ENCODE measurements at regions of chr1 and their contacts with region 1.

Region 1: DNA sequence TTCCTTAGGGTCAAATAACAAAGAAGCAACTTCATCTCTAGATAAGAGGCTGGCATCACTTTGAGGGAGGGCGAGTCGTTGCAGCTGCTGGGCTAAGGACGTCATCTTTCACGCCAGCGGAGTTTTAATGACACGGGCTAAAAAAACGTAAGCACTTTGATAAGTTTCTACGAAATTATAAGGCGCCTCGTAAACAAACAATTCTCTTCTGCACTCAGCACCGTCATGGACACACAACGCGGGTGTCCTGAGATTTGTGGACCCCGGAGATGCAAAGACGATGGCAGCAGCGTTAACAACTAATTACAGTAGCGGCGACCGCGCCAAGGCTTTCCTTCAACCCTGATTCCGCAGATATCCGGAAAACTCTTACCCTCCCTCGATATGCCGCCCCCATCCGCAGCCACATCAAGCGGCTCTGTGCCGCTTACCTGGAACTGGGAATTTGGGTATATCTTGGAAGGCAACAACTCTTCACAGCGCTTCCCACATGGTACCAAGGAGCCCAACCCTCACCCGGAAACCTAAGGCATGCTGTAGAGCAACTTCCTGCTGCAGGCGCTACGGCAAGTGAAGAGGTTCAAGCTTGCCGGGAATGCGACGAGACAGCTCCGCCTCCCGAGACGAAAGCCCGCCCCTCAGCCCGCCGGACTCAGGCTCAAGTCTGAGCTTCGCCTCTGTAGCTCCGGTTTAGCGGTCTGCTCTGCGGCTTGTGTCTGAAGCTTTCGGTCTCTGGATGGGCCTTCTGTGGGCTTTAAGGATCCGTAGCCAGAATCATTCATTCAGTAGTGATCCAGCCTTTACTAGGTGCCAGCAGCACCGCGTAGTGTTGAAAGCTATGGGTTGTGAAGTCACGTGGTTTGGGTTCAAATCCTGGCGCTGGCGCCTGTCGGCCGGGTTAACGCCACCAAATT is at the start of gene HEATR1:
- DNase-seq: peak; percentile 99
- H3K4me3 Mint-ChIP-seq: peak within 1 kb of the TSS; percentile 81
- H3K27ac Mint-ChIP-seq: peak within 1 kb of the TSS; percentile 87
- H3K4me1 Mint-ChIP-seq: peaks cover 14% of the 10 kb centered on the region
- H3K27me3 Mint-ChIP-seq: peaks cover 2% of the 10 kb centered on the region
- CTCF ChIP-seq: no peak
- total RNA-seq, gene HEATR1: 90.6 and 128 TPM in 2 replicates

Region 2: DNA sequence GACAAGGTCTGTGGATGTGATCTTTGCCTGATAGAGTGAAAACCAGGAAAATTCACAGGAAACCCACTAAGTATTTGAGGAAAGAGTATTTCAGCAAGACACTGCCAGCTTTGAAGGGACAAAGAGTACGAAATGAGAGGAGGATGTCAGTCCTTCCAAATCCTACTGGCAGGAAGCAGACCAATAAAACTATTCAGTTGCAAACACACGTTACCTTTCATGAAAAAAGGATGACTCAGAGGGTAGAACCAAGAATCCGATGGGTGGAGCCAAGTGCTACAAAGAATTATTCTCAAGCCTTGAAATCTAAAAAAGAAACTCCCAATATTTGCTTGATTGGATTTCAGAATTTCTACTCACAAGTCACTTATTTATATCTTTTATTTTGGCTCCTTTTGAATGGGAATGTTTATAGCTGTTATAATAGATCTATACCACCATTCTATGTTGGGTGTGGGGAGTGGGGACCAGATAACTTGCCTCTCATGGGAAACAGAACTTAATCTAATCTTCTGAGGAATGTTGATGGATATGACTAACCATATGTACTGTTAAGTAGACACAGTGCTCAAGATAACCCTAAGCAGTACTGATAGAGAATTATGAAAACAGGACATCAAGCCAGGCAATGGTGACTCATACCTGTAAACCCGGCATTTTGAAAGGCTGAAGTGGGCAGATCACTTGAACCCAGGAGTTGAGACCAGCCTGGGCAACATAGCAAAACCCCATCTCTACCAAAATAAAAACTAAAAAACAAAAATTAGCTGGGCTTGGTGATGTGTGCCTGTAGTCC is 19.3 kb after region 1 on chr1:
- CTCF ChIA-PET with region 1: interaction called, 17 read pairs
- POLR2A ChIA-PET with region 1: interaction called, 5 read pairs
- intact Hi-C with region 1: no loop called
- DNase-seq: peak; percentile 34
- H3K4me3 Mint-ChIP-seq: no peak overlapping the region
- H3K27ac Mint-ChIP-seq: no peak overlapping the region
- H3K4me1 Mint-ChIP-seq: no peaks in the 10 kb centered on the region
- H3K27me3 Mint-ChIP-seq: peaks cover 3% of the 10 kb centered on the region
- CTCF ChIP-seq: no peak

Region 3: GRCh38 chr1:236759252-236759859 is 155.1 kb after region 1 on chr1:
- CTCF ChIA-PET with region 1: interaction called, 18 read pairs
- POLR2A ChIA-PET with region 1: interaction called, 3 read pairs
- intact Hi-C with region 1: loop called (anchors 5 kb)
- DNase-seq: peak; percentile 81
- H3K4me3 Mint-ChIP-seq: no peak overlapping the region
- H3K27ac Mint-ChIP-seq: no peak overlapping the region
- H3K4me1 Mint-ChIP-seq: no peaks in the 10 kb centered on the region
- H3K27me3 Mint-ChIP-seq: no peaks in the 10 kb centered on the region
- CTCF ChIP-seq: peak; percentile 90

Region 4: DNA sequence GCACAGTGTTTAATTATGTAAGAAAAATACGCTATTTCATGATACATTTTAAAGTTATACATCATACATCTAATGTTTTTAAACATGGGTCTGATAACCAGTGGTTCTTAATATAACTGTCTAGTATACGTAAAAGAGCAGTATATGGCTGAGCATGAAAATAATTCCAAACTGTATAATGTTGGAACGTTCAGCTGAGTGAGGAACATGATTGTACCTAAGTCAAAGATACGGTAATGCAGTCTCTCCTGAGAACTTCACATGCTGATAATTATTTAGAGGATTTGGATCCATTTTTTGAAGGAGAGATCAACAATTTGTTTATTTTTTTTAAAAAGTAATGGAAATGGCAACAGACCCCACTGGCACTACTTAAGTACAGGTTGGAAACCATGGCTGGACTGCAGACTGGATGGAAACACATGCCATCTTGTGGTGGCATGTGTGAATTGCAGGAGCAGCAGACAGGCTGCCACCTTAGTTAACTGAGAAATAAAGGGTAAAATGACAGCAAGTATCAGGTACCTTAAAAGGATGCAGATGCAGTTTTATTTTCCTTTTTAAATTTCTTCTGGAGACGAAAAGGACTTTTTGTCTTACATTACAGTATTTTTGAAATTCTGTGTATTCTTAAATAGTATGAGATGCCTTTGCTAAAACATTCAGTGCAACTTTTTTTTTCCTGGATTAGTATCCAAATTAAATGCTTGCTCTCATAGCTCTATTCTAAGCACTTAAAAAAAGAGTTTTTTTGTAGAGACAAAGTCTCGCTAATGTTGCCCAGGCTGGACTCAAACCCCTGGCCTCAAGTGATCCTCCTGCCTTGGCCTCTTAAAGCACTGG is 264.6 kb after region 1 on chr1:
- CTCF ChIA-PET with region 1: interaction called, 40 read pairs
- POLR2A ChIA-PET with region 1: interaction called, 3 read pairs
- intact Hi-C with region 1: loop called (anchors 1 kb)
- DNase-seq: peak; percentile 76
- H3K4me3 Mint-ChIP-seq: no peak overlapping the region
- H3K27ac Mint-ChIP-seq: no peak overlapping the region
- H3K4me1 Mint-ChIP-seq: peaks cover 5% of the 10 kb centered on the region
- H3K27me3 Mint-ChIP-seq: no peaks in the 10 kb centered on the region
- CTCF ChIP-seq: peak; percentile 99

Region 5: DNA sequence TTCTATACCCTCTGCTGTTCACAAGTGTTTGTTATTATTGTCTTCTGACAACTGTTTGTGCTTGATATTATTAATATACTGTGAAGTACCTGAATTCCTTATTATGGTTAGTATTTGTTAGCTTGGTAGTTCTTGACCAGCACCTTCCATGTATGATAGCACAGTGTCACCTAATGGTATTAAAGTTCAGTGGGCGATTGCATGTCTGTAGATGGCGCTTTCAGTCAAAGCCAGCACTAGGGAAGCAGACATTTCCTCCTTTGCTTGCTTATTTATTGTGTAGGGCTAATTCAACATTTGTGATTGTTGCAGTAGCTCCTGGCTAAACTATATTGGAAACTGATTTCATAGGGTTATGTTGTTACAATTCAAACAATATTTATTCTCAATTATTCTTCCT is 1068.5 kb after region 1 on chr1:
- CTCF ChIA-PET with region 1: no interaction called
- POLR2A ChIA-PET with region 1: no interaction called
- intact Hi-C with region 1: loop called (anchors 5 kb)
- DNase-seq: peak; percentile 65
- H3K4me3 Mint-ChIP-seq: no peak overlapping the region
- H3K27ac Mint-ChIP-seq: no peak overlapping the region
- H3K4me1 Mint-ChIP-seq: peaks cover 5% of the 10 kb centered on the region
- H3K27me3 Mint-ChIP-seq: no peaks in the 10 kb centered on the region
- CTCF ChIP-seq: peak; percentile 56

Measured in MCF 10A (cell line).